ENCODE measurements at regions of chrX and their contacts with region 1.

Region 1: DNA sequence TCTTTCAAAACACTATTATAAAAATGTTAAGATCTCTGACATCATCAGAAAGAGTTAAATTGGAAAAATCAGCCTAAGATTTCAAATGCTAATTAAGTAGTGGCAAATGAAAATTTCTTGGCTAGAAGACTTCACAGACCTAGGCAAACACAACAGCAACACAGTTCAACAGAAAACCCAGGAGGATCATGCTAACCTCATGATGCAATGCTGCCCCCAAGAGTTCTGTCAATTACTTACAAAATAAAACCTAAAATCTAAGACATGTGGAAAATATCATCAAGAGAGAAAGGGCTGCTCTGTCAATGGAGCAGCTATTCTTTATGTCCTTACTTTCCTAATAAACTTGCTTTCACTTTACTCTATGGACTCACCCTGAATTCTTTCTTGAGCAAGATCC is 21.0 kb downstream of the S100G start:
- DNase-seq: peak; percentile 72
- ATAC-seq: peak; percentile 76
- H3K4me3 ChIP-seq: no peak overlapping the region
- H3K27ac ChIP-seq: no peak overlapping the region
- H3K4me1 ChIP-seq: peaks cover 3% of the 10 kb centered on the region
- H3K27me3 ChIP-seq: no peaks in the 10 kb centered on the region; the same call in 1 of the 2 replicates
- CTCF ChIP-seq: peak; percentile 61
- POLR2A ChIP-seq: no peak
- RAD21 ChIP-seq: peak; percentile 71

Region 2: GRCh38 chrX:15579778-15580747 is 1090.9 kb before region 1 on chrX:
- CTCF ChIA-PET with region 1: no interaction called
- POLR2A ChIA-PET with region 1: no interaction called
- dilution Hi-C with region 1: no loop called
- in situ Hi-C with region 1: no loop called
- intact Hi-C with region 1: no loop called
- DNase-seq: peak; percentile 4
- ATAC-seq: no peak
- H3K4me3 ChIP-seq: no peak overlapping the region
- H3K27ac ChIP-seq: no peak overlapping the region
- H3K4me1 ChIP-seq: no peaks in the 10 kb centered on the region
- H3K27me3 ChIP-seq: peaks cover 5% of the 10 kb centered on the region
- CTCF ChIP-seq: no peak
- POLR2A ChIP-seq: no peak
- RAD21 ChIP-seq: no peak

Region 3: DNA sequence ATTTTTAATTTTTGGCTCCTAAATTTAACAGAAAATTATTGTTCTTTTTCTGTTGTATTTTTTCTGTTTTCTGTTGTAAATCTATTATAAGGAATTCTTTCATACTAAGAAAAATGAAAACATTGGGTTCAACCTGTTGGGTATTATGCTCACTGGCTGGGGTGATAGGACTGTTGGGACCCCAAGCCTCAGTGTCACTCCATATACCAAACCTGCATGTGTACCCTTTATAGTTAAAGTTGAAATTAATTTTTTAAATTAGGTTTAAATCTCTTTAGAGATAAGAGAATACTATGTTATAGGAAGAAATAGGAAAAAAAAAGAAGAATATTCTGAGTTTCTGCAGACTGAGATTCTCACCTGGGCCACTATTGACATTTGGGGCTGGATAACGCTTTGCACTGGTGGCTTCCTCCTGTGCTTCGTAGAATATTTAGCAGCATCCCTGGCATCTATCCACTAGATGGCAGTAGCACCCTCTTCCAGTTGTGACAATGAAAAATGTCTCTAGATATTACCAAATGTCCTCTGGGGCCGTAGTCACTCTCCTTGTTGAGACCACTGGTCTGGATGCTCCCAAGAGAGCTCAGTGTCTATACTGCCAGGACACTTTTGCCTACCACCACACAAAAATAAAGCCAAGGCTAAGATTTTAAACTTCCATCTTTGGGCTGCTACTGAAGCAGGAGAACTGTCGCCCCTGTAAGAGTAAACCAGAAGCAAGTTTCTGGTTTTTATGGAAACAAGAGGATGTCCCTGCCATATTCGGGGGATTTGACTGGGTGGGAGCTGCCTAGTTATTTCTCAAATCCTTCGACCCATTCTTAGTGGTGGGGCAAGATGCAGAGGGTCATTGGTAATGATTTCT is 983.9 kb before region 1 on chrX:
- CTCF ChIA-PET with region 1: no interaction called
- POLR2A ChIA-PET with region 1: no interaction called
- dilution Hi-C with region 1: no loop called
- in situ Hi-C with region 1: no loop called
- intact Hi-C with region 1: loop called (anchors 2 kb)
- DNase-seq: peak; percentile 61
- ATAC-seq: peak; percentile 91
- H3K4me3 ChIP-seq: no peak overlapping the region
- H3K27ac ChIP-seq: no peak overlapping the region
- H3K4me1 ChIP-seq: no peaks in the 10 kb centered on the region
- H3K27me3 ChIP-seq: no peaks in the 10 kb centered on the region
- CTCF ChIP-seq: peak; percentile 83
- POLR2A ChIP-seq: no peak
- RAD21 ChIP-seq: peak; percentile 67

Region 4: GRCh38 chrX:15761564-15762191 is 909.3 kb before region 1 on chrX:
- CTCF ChIA-PET with region 1: no interaction called
- POLR2A ChIA-PET with region 1: no interaction called
- dilution Hi-C with region 1: no loop called
- in situ Hi-C with region 1: no loop called
- intact Hi-C with region 1: loop called (anchors 2 kb)
- DNase-seq: peak; percentile 41
- ATAC-seq: peak; percentile 86
- H3K4me3 ChIP-seq: no peak overlapping the region
- H3K27ac ChIP-seq: no peak overlapping the region
- H3K4me1 ChIP-seq: no peaks in the 10 kb centered on the region
- H3K27me3 ChIP-seq: no peaks in the 10 kb centered on the region
- CTCF ChIP-seq: peak; percentile 80
- POLR2A ChIP-seq: no peak
- RAD21 ChIP-seq: peak; percentile 76

Region 5: GRCh38 chrX:16320765-16321355 is 350.1 kb before region 1 on chrX:
- CTCF ChIA-PET with region 1: no interaction called
- POLR2A ChIA-PET with region 1: no interaction called
- dilution Hi-C with region 1: no loop called
- in situ Hi-C with region 1: no loop called
- intact Hi-C with region 1: loop called (anchors 5 kb)
- DNase-seq: peak; percentile 77
- ATAC-seq: peak; percentile 82
- H3K4me3 ChIP-seq: no peak overlapping the region
- H3K27ac ChIP-seq: no peak overlapping the region
- H3K4me1 ChIP-seq: peaks cover 5% of the 10 kb centered on the region; the same call in 1 of the 2 replicates
- H3K27me3 ChIP-seq: no peaks in the 10 kb centered on the region
- CTCF ChIP-seq: no peak
- POLR2A ChIP-seq: no peak
- RAD21 ChIP-seq: no peak

Region 6: GRCh38 chrX:16445166-16445752 is 225.7 kb before region 1 on chrX:
- CTCF ChIA-PET with region 1: no interaction called
- POLR2A ChIA-PET with region 1: no interaction called
- dilution Hi-C with region 1: no loop called
- in situ Hi-C with region 1: loop called (anchors 10 kb)
- intact Hi-C with region 1: no loop called
- DNase-seq: peak; percentile 47
- ATAC-seq: peak; percentile 75
- H3K4me3 ChIP-seq: no peak overlapping the region
- H3K27ac ChIP-seq: no peak overlapping the region
- H3K4me1 ChIP-seq: no peaks in the 10 kb centered on the region; the same call in 1 of the 2 replicates
- H3K27me3 ChIP-seq: no peaks in the 10 kb centered on the region
- CTCF ChIP-seq: peak; percentile 60
- POLR2A ChIP-seq: no peak
- RAD21 ChIP-seq: peak; percentile 55

Measured in IMR-90 (cell line).